ENCODE measurements at regions of chr13 and their contacts with region 1.

Region 1: GRCh38 chr13:28658796-28659620 is at the start of gene POMP:
- DNase-seq: peak; percentile 95
- ATAC-seq: peak; percentile 88
- H3K4me3 Mint-ChIP-seq: peak within 1 kb of the TSS; percentile 99
- H3K27ac Mint-ChIP-seq: peak within 1 kb of the TSS; percentile 98
- H3K4me1 Mint-ChIP-seq: peaks cover 59% of the 10 kb centered on the region
- H3K27me3 Mint-ChIP-seq: no peaks in the 10 kb centered on the region
- total RNA-seq, gene POMP: 107 to 132 TPM

Region 2: GRCh38 chr13:27620377-27621115 is 1038.5 kb before region 1 on chr13 and contains the start of gene LNX2:
- CTCF ChIA-PET with region 1: no interaction called
- POLR2A ChIA-PET with region 1: no interaction called
- intact Hi-C with region 1: loop called in 1 of 2 experiments (anchors 5 kb)
- DNase-seq: peak; percentile 98
- ATAC-seq: peak; percentile 92
- H3K4me3 Mint-ChIP-seq: peak within 1 kb of the TSS; percentile 92
- H3K27ac Mint-ChIP-seq: peak within 1 kb of the TSS; percentile 91
- H3K4me1 Mint-ChIP-seq: peaks cover 51% of the 10 kb centered on the region
- H3K27me3 Mint-ChIP-seq: no peaks in the 10 kb centered on the region
- total RNA-seq, gene LNX2: 4.7 to 4.8 TPM

Region 3: GRCh38 chr13:28494776-28495537 is 164.1 kb before region 1 on chr13 and contains the start of gene FLT1:
- CTCF ChIA-PET with region 1: interaction called, 3 read pairs
- POLR2A ChIA-PET with region 1: interaction called, 5 read pairs
- intact Hi-C with region 1: loop called in 1 of 2 experiments (anchors 1 kb)
- DNase-seq: peak; percentile 69
- ATAC-seq: peak; percentile 55
- H3K4me3 Mint-ChIP-seq: peak within 1 kb of the TSS; percentile 76
- H3K27ac Mint-ChIP-seq: peak within 1 kb of the TSS; percentile 22
- H3K4me1 Mint-ChIP-seq: peaks cover 23% of the 10 kb centered on the region
- H3K27me3 Mint-ChIP-seq: peaks cover 35% of the 10 kb centered on the region
- total RNA-seq, gene FLT1: 21.7 to 27.4 TPM

Region 4: DNA sequence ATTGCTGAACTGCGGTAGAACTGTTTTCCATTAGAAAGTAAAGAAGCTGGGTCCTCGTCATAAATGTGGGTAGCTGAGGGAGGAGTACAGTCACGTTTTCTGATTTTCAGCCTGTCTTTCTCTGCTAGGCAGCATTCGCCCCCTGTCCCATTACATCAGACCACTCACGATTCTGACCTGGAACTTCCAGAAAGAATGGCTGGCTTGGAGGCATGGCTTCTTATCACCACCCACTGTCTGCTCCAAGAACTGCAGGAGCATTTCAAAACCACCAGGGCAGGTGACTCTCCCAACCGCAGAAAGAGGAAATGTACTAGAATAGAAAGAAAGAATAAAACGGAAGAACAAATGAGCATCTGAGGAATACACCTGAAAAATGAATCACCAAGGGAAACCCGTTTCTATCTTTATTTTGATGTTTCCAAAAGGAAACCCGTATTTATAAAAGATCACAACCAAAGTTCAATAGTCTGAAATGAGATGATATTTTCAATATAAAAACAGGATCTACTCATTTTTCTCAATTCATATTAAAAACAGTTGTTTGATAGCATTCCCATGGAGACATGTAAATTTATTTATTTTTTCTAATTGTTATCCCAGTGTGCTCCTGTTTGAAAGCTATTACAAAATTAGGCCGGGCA is 22.2 kb before region 1 on chr13:
- CTCF ChIA-PET with region 1: interaction called, 8 read pairs
- POLR2A ChIA-PET with region 1: no interaction called
- intact Hi-C with region 1: loop called in 1 of 2 experiments (anchors 1 kb)
- DNase-seq: peak; percentile 75
- ATAC-seq: peak; percentile 92
- H3K4me3 Mint-ChIP-seq: peak overlapping the region; percentile 0
- H3K27ac Mint-ChIP-seq: no peak overlapping the region
- H3K4me1 Mint-ChIP-seq: peaks cover 12% of the 10 kb centered on the region
- H3K27me3 Mint-ChIP-seq: peaks cover 16% of the 10 kb centered on the region

Region 5: DNA sequence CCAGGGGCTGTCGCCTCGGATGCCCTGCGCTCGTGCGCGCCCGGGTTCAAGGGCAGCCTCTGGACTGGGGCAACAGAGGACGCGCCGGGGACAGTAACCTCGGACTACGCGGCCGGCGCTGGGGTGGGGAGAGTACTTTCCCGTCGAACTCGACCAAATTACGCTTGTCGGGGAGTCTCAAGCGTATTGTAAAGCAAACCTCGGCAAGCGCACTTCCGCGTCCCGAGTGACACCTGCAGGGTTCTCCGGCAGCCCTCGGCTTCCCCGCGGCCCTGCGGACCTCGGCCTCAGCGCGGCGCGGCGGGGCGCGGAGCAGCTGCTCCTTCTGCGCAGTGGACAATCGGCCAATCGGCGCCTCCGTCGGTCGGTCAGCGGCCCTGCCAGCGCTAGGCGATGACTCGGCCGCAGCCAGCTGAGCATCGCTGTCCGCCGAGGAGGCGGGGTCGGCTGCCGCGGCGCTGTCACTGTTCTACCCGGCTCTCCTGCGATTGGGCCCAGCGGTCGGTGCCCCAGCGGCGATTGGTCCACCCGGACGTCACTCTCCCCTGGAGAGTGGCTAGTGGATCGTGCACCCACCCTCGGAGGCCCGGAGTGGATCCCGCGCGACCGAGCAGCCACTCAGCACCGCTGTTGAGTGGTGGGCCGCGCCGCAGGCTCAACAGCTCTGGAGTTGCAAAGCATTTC is 59.7 kb after region 1 on chr13 and contains the start of gene SLC46A3:
- CTCF ChIA-PET with region 1: no interaction called
- POLR2A ChIA-PET with region 1: no interaction called
- intact Hi-C with region 1: loop called (anchors 1 to 2 kb)
- DNase-seq: peak; percentile 97
- ATAC-seq: peak; percentile 100
- H3K4me3 Mint-ChIP-seq: peak within 1 kb of the TSS; percentile 84
- H3K27ac Mint-ChIP-seq: peak within 1 kb of the TSS; percentile 94
- H3K4me1 Mint-ChIP-seq: peaks cover 23% of the 10 kb centered on the region
- H3K27me3 Mint-ChIP-seq: no peaks in the 10 kb centered on the region
- total RNA-seq, gene SLC46A3: 2.8 to 3.2 TPM